ENCODE measurements at regions of chrX and their contacts with region 1.

Region 1: DNA sequence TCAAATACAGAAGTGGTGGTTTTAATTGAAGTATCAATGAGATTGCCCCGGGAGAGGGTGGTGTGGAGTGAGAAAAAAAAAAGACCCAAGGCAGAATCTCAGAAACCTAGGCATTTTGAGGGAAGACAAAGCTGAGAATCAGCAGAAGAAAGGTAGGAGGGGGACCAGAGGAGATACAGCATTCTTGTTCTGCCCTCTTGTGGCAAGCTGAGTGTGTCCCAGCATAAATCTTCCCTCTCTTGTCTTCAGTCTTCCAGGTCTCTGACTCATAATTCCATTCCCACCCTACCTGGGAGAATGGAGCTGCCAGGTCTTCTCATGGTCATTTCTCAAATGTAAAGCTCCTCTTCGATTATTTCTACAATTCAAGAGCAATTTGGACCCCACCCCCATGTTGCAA is 32.7 kb upstream of the MAGED1 start:
- DNase-seq: peak in 4 of 10 donors; percentile 5 to 42 (median 16)
- H3K4me3 ChIP-seq: no peak overlapping the region
- H3K27ac ChIP-seq: no peak overlapping the region
- H3K27me3 ChIP-seq: peaks cover 0 to 48% (median 5%) of the 10 kb centered on the region in 45 donors
- CTCF ChIP-seq: peak in 55 of 56 donors; percentile 22 to 69 (median 52)

Region 2: GRCh38 chrX:51614353-51615012 is 246.2 kb before region 1 on chrX:
- intact Hi-C with region 1: loop called in 1 of 2 experiments (anchors 10 kb)
- DNase-seq: no peak
- H3K4me3 ChIP-seq: no peak overlapping the region
- H3K27ac ChIP-seq: no peak overlapping the region
- H3K27me3 ChIP-seq: peaks cover 0 to 91% (median 31%) of the 10 kb centered on the region in 45 donors
- CTCF ChIP-seq: peak in 53 of 56 donors; percentile 25 to 68 (median 53)

Region 3: DNA sequence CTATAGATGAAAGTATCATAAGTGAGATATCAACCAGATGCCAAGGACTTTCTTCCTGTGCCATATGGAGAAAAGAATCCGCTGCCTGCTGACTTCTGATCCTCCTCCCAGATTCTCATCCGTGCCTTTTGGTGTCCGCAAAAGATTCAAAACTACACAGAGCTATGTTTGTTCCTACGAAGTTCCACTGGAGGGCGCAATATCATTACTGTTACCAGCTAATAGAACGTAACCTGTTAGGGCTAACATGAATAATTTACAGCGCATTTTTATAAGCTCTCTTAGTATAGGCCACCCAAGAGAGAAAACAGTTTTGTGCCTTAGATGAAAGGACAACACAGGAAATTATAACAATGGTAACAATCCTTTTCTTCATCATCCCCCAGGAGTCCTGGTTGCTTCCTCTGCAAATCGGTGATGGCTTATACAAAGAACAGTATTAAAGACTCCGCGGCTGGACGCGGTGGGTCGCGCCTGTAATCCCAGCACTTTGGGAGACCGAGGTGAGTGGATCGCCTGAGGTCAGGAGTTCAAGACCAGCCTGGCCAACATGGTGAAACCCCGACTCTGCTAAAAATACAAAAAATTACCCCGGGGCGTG is 219.2 kb before region 1 on chrX:
- intact Hi-C with region 1: loop called in 1 of 2 experiments (anchors 5 kb)
- DNase-seq: peak in 2 of 10 donors; percentile 10 to 42
- H3K4me3 ChIP-seq: peak overlapping the region in 7 of 59 donors; percentile 0 to 37 (median 22)
- H3K27ac ChIP-seq: no peak overlapping the region
- H3K27me3 ChIP-seq: peaks cover 0 to 81% (median 38%) of the 10 kb centered on the region in 45 donors
- CTCF ChIP-seq: peak in 53 of 56 donors; percentile 16 to 67 (median 50)

Measured in dorsolateral prefrontal cortex (tissue), 120 donors.